Dorsolateral prefrontal cortex (tissue), 120 donors: ENCODE measurements at regions of chr6 and their contacts with region 1.

Region 1: GRCh38 chr6:797479-798077 is 104.6 kb upstream of the EXOC2 start:
- DNase-seq: peak in 3 of 10 donors; percentile 27 to 59 (median 31)
- H3K4me3 ChIP-seq: no peak overlapping the region
- H3K27ac ChIP-seq: no peak overlapping the region
- H3K27me3 ChIP-seq: peaks cover 0 to 39% (median 0%) of the 10 kb centered on the region in 45 donors
- CTCF ChIP-seq: peak; percentile 54 to 95 (median 86)

Region 2: GRCh38 chr6:624979-625378 is 172.6 kb before region 1 on chr6:
- intact Hi-C with region 1: loop called in 1 of 2 experiments (anchors 10 kb)
- DNase-seq: no peak
- H3K4me3 ChIP-seq: peak overlapping the region in 4 of 59 donors; percentile 11 to 23 (median 16)
- H3K27ac ChIP-seq: peak overlapping the region in 2 of 59 donors; percentile 14 to 31
- H3K27me3 ChIP-seq: no peaks in the 10 kb centered on the region
- CTCF ChIP-seq: peak in 45 of 56 donors; percentile 17 to 70 (median 40)

Region 3: GRCh38 chr6:1311400-1312202 is 514.0 kb after region 1 on chr6 and contains the start of gene FOXQ1:
- intact Hi-C with region 1: loop called in 1 of 2 experiments (anchors 10 kb)
- DNase-seq: peak in 7 of 10 donors; percentile 24 to 71 (median 61)
- H3K4me3 ChIP-seq: peak within 1 kb of the TSS; percentile 15 to 72 (median 54)
- H3K27ac ChIP-seq: peak within 1 kb of the TSS in 54 of 59 donors; percentile 24 to 90 (median 75)
- H3K27me3 ChIP-seq: peaks cover 0 to 72% (median 56%) of the 10 kb centered on the region in 45 donors
- CTCF ChIP-seq: peak in 2 of 56 donors; percentile 4 to 6
- total RNA-seq, gene FOXQ1: 1.4 to 10.0 (median 4.2) TPM